OCI-LY7 (cell line): ENCODE measurements at regions of chr14 and their contacts with region 1.

Region 1: GRCh38 chr14:99683619-99684355 is at the start of gene CYP46A1:
- DNase-seq: peak; percentile 100
- H3K4me3 ChIP-seq: peak within 1 kb of the TSS; percentile 89
- H3K27ac ChIP-seq: peak within 1 kb of the TSS; percentile 60
- H3K4me1 ChIP-seq: peaks cover 42% of the 10 kb centered on the region
- CTCF ChIP-seq: no peak
- total RNA-seq, gene CYP46A1: 2.0 and 4.1 TPM in 2 replicates

Region 2: DNA sequence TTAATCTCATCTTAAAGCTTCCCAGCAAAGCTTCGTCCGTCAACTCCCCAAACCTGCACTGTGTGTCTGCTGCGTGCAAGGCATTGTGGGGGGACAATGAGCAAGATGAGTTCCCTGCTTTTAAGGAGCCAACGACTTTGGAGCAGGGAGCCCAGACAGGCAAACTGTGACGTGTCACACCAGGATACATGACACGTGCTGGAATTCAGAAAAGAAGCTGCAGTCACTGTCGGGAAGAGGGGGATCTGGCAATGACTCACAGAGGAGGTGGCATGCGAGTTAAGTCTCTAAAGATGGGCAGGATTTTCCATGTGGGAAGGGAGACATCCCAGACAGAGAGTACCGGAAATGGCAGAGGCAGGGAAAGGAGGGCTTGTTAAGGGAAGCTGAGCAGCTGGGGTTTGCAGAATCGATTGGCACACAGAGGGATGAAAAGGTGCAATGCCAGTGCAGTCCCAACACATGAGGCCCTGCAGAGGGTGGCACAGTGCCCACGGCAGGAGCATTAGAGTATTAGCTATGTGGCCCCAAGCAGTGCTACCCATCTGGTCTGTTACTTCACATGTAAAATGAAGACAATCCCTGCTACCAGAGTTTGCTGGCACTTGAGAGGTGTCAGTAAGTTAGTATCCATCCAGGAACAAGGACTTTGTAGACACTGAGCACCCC is 256.0 kb before region 1 on chr14:
- CTCF ChIA-PET with region 1: interaction called, 4 read pairs
- POLR2A ChIA-PET with region 1: no interaction called
- intact Hi-C with region 1: loop called (anchors 5 kb)
- DNase-seq: no peak
- H3K4me3 ChIP-seq: no peak overlapping the region
- H3K27ac ChIP-seq: no peak overlapping the region
- H3K4me1 ChIP-seq: peaks cover 82% of the 10 kb centered on the region
- CTCF ChIP-seq: no peak

Region 3: DNA sequence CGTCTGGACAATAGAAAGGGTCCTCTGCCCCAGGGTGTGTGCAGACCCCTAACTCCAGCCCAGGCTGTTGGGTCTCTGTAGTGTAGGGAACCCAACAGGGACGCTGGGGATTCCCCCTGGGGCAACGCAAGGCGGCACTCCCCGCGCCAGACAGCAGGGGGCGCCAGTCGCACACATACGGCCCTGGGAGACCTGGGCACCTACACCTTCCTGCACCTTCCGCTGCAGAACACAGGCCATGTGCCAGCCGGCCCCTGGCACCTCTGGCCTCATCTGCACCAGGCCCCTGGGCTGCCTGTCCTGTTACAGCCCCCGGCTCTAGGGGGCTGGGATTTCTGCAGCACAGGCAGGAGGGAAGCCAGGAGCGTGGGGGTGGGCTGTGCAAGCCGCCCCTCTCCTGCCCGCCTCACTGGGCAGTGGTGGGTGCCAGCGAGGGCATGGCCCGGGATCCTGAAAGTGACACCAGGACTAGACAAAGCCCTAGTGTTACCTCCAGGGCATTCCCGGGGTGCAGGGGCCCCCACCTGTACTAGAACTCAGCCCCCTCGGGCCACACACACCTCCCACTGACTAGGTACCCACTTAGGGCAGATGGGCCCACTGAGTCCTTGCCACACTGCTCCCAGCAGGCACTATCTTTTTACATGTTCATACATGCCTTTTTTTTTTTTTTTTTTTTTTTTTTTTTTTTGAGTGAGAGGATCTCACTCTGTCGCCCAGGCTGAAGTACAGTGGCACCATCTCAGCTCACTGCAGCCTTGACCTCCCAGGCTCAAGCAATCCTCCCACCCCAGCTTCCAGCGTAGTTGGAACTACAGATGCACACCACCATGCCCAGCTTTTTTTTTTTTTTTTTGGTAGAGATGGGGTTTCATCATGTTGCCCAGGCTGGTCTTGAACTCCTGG is 165.1 kb before region 1 on chr14:
- CTCF ChIA-PET with region 1: interaction called, 3 read pairs
- POLR2A ChIA-PET with region 1: no interaction called
- intact Hi-C with region 1: loop called (anchors 2 kb)
- DNase-seq: peak; percentile 72
- H3K4me3 ChIP-seq: no peak overlapping the region
- H3K27ac ChIP-seq: no peak overlapping the region
- H3K4me1 ChIP-seq: no peaks in the 10 kb centered on the region
- CTCF ChIP-seq: peak; percentile 86

Region 4: DNA sequence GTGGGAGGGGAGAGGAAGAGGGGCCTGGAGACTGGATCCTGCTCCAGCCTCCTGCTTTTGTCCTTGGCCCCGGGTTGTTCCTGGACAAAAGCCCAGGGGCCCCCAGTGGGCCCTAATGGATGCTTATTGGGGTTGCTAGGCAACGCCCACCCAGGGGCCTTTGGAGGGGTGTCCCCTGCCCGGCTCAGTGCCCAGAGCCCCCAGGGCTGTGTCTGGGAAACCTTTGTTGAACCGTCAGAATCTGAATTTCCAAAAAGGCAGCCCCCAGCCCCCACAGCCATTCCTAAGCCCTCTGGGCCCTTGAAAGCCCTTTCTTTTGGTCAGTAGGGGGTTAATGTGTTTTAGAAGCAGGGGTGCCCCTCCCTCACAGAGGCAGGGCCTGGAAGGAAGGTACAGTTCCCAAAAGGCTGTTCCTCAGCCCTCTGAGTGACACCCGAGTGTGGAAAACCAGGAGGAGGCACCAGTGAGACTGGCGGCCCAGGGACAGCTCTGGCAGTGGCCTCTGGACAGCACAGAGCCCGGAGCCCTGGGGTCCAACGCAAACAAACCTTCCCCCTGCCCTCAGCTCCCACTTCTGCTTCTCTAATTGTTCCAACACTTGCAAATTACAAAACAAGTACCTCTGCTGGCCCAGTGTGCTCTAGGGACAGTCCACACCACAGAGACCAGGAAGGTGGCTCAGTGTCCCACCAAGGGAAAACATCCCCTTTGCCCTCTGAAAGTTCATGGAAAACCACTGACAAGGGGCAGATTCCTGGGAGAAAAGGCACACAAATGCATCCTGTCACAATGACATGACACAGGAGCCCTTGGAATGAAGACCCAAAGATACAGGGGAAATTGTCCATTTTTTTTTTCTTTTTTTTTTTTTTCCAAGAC is 19.5 kb before region 1 on chr14:
- CTCF ChIA-PET with region 1: interaction called, 6 read pairs
- POLR2A ChIA-PET with region 1: interaction called, 5 read pairs
- intact Hi-C with region 1: loop called (anchors 2 kb)
- DNase-seq: peak; percentile 39
- H3K4me3 ChIP-seq: peak overlapping the region; percentile 54
- H3K27ac ChIP-seq: peak overlapping the region; percentile 87
- H3K4me1 ChIP-seq: peaks cover 70% of the 10 kb centered on the region
- CTCF ChIP-seq: no peak

Region 5: GRCh38 chr14:99737451-99737951 is 53.7 kb after region 1 on chr14:
- CTCF ChIA-PET with region 1: no interaction called
- POLR2A ChIA-PET with region 1: no interaction called
- intact Hi-C with region 1: no loop called
- DNase-seq: no peak
- H3K4me3 ChIP-seq: no peak overlapping the region
- H3K27ac ChIP-seq: no peak overlapping the region
- H3K4me1 ChIP-seq: no peaks in the 10 kb centered on the region
- CTCF ChIP-seq: no peak

Region 6: DNA sequence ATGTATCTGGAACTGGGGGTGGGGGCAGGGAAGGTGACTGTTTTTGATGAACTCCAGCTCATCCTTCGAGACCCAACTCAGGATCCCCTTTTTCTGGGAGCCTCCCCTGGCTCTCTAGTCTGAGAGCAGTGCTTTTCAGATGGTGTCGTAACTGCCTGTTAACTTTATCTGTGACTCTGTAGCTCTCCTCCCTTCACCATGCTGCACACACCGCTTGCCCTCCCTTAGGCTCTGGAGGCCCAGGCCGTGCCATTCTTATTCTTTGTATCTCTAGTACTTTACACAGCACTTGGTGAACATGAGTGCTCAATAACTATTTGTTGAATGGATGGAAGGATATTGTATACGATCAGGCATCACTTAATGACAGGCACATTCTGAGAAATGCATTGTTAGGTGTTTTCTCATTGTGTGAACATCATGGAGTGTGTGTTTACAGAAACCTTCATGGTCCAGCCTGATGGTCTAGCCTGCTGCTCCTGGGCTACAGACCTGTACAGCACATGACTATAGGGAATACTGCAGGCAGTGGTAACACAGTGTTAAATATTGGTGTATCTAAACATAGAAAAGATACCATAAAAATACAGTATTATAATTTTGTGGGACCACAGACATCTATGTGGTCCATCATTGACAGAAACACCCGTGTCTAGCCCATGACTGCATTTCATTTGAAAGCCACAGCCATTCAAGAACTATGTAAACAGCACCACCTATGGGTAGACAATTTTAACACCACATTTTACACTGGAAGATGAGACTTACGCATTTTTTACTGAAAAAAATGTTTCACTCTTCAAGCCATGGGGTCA is 201.3 kb after region 1 on chr14:
- CTCF ChIA-PET with region 1: no interaction called
- POLR2A ChIA-PET with region 1: no interaction called
- intact Hi-C with region 1: loop called (anchors 2 kb)
- DNase-seq: peak; percentile 68
- H3K4me3 ChIP-seq: no peak overlapping the region
- H3K27ac ChIP-seq: no peak overlapping the region
- H3K4me1 ChIP-seq: no peaks in the 10 kb centered on the region
- CTCF ChIP-seq: peak; percentile 95